Heart right ventricle (tissue), 16 donors: ENCODE measurements at regions of chr15 and their contacts with region 1.

Region 1: DNA sequence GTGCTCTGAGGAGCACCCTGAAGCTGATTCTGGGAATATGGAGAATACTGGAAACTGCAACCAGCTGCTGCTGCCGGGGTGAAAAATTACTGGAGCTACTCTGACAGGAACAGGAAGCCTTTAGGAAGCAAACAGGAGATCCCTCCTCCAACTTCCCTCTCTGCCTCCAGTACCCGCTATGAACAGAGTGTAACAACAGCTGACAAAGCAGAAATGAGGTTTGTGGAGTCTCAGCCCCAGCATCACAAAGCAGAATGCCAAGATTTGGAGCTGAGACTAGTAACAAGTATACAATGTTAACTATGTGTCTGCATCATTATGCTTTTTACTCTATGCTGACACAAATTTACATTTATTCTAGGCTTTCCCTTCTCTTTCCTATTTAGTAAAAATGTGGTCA is 22.7 kb upstream of the PIAS1 start:
- DNase-seq: no peak
- ATAC-seq: peak in 5 of 8 donors; percentile 52 to 63 (median 60)
- H3K4me3 ChIP-seq: no peak overlapping the region
- H3K27ac ChIP-seq: peak overlapping the region in 2 of 10 donors; percentile 22 to 78
- H3K4me1 ChIP-seq: peaks cover 0 to 31% (median 0%) of the 10 kb centered on the region in 9 donors
- H3K27me3 ChIP-seq: no peaks in the 10 kb centered on the region
- CTCF ChIP-seq: no peak

Region 2: DNA sequence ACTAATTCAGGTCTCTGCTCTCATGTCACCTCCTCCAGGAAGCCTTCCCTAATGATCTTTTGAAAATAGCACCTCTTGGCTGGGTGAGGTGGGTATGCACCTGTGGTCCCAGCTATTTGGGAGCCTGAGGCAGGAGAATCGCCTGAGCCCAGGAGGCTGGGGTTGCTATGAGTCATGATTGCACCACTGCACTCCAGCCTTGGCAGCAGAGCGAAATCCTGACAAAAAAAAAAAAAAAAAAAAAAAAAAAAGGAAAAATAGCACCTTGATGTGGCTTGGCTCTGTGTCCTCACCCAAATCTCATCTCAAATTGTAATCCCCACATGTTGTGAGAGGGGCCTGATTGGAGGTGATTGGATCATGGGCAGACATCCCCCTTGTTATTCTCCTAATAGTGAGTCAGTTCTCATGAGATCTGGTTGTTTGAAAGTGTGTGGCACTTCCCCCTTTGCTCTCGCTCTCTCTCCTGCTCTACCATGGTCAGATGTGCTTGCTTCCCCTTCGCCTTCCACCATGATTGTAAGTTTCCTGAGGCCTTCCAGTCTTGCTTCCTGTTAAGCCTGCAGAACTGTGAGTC is 180.3 kb before region 1 on chr15:
- intact Hi-C with region 1: no loop called
- DNase-seq: no peak
- ATAC-seq: peak in 1 of 8 donors; percentile 35
- H3K4me3 ChIP-seq: no peak overlapping the region
- H3K27ac ChIP-seq: no peak overlapping the region
- H3K4me1 ChIP-seq: peaks cover 0 to 7% (median 0%) of the 10 kb centered on the region in 9 donors
- H3K27me3 ChIP-seq: no peaks in the 10 kb centered on the region
- CTCF ChIP-seq: no peak

Region 3: DNA sequence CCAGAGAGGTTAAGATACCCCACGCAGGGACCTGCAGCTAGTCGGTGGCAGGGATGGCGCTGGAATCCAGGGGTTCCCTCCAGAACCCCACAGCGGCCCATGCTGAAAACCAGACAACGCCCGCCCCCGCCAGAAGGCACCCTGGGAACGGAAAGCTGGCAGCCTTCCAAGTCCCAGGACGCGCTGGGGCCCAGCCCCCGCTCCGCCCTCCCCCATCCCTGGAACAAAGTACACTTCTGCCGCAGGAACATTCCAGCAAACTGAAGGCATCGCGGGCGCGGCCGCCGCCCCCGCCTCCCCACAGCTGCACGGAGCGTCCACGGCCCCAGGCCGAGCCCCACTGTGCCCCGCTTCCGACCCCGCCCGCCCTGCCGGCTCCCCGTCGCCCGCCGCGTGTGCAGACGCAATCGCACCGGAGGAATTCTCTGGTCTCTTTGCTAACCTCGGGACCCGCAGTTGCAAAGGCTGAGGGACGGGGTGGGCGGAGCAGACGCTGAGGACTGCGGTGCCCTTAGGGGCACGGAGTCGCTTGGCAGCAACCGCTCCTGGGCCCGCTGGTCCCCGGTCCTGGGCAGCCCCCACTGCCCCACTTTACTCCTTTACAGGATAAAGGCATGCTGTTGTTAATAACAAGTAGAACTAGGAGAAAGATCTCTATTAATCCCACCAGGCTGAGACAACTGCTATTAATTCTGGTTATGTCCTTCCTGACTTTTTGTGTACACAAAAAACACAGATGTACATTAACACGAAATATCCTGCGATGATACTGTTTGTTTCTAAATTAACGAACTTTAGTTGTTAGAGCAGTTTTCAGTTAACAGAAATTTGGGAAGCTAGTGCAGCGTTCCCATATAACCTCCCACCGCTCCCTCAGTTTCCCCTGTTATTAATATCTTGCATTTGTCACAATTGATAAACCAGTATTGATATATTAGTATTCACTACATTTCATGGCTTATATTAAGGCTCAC is 146.6 kb before region 1 on chr15:
- intact Hi-C with region 1: loop called in 1 of 10 experiments (anchors 10 kb)
- DNase-seq: peak; percentile 84 to 85
- ATAC-seq: peak; percentile 91 to 98 (median 95)
- H3K4me3 ChIP-seq: peak overlapping the region; percentile 28 to 64 (median 58)
- H3K27ac ChIP-seq: peak overlapping the region; percentile 61 to 87 (median 78)
- H3K4me1 ChIP-seq: peaks cover 0 to 56% (median 11%) of the 10 kb centered on the region in 9 donors
- H3K27me3 ChIP-seq: no peaks in the 10 kb centered on the region
- CTCF ChIP-seq: no peak